Left ventricle myocardium inferior (tissue), 1 donor: ENCODE measurements at regions of chr4 and their contacts with region 1.

Region 1: GRCh38 chr4:74311696-74312313 is 3.5 kb downstream of the EPGN start:
- DNase-seq: no peak
- H3K4me3 ChIP-seq: no peak overlapping the region
- H3K27ac ChIP-seq: no peak overlapping the region
- H3K4me1 ChIP-seq: no peaks in the 10 kb centered on the region
- H3K27me3 ChIP-seq: no peaks in the 10 kb centered on the region
- CTCF ChIP-seq: peak; percentile 74

Region 2: GRCh38 chr4:74189331-74190043 is 122.3 kb before region 1 on chr4:
- intact Hi-C with region 1: loop called (anchors 5 kb)
- DNase-seq: no peak
- H3K4me3 ChIP-seq: no peak overlapping the region
- H3K27ac ChIP-seq: no peak overlapping the region
- H3K4me1 ChIP-seq: no peaks in the 10 kb centered on the region
- H3K27me3 ChIP-seq: no peaks in the 10 kb centered on the region
- CTCF ChIP-seq: peak; percentile 76

Region 3: DNA sequence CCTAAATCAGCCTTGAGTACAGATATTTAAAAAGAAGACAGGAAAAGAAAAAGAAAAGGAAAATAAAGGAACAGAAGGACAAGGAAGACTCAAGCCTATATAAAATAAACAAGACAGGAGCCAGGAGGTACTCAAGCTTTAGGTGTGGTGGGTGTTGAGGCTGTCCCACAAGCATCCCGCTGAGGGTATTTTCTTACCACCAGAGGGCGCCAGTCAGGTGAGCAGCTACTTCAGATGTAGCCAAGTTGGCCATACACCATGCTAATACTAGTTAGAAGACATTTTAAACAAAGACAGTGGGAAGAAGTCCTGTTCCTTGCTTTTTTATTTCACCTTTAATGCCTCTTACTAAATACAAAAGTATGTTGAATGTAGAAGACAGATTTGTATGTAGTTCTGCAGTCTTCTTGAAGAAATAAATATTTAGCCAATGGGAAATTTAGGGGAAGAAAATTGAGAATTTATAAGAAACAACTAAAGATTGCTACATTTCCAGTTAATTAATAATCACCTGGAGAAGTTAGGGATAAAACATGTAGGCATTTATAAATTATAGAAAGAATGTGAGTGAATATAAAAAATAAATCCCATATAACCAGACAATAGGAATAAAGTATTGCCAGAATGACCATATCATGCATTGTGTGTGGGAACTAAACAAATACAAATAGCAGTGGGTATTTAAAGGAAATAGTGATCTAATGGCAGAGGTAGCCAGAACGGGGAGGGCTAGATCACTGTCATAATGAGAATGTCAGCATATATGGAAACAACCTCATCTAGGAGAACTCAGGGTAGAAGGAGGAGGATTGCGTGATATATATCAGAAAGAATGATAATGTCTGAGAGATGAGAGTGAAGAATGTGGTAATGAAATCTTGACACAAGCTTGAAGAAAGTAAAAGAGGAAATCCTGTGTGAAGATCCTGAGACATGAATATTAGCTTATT is 82.8 kb before region 1 on chr4:
- intact Hi-C with region 1: loop called (anchors 5 kb)
- DNase-seq: peak; percentile 59
- H3K4me3 ChIP-seq: no peak overlapping the region
- H3K27ac ChIP-seq: no peak overlapping the region
- H3K4me1 ChIP-seq: peaks cover 13% of the 10 kb centered on the region
- H3K27me3 ChIP-seq: no peaks in the 10 kb centered on the region
- CTCF ChIP-seq: peak; percentile 89

Region 4: GRCh38 chr4:74431113-74431826 is 119.5 kb after region 1 on chr4:
- intact Hi-C with region 1: no loop called
- DNase-seq: no peak
- H3K4me3 ChIP-seq: no peak overlapping the region
- H3K27ac ChIP-seq: peak overlapping the region; percentile 53
- H3K4me1 ChIP-seq: peaks cover 18% of the 10 kb centered on the region
- H3K27me3 ChIP-seq: no peaks in the 10 kb centered on the region
- CTCF ChIP-seq: no peak

Region 5: GRCh38 chr4:74451200-74451661 is 139.4 kb after region 1 on chr4:
- intact Hi-C with region 1: no loop called
- DNase-seq: no peak
- H3K4me3 ChIP-seq: no peak overlapping the region
- H3K27ac ChIP-seq: no peak overlapping the region
- H3K4me1 ChIP-seq: no peaks in the 10 kb centered on the region
- H3K27me3 ChIP-seq: no peaks in the 10 kb centered on the region
- CTCF ChIP-seq: no peak

Region 6: GRCh38 chr4:74583077-74583693 is 271.4 kb after region 1 on chr4:
- intact Hi-C with region 1: no loop called
- DNase-seq: no peak
- H3K4me3 ChIP-seq: no peak overlapping the region
- H3K27ac ChIP-seq: no peak overlapping the region
- H3K4me1 ChIP-seq: no peaks in the 10 kb centered on the region
- H3K27me3 ChIP-seq: no peaks in the 10 kb centered on the region
- CTCF ChIP-seq: no peak

Region 7: GRCh38 chr4:74659576-74660411 is 348.0 kb after region 1 on chr4:
- intact Hi-C with region 1: no loop called
- DNase-seq: no peak
- H3K4me3 ChIP-seq: no peak overlapping the region
- H3K27ac ChIP-seq: no peak overlapping the region
- H3K4me1 ChIP-seq: no peaks in the 10 kb centered on the region
- H3K27me3 ChIP-seq: peaks cover 7% of the 10 kb centered on the region
- CTCF ChIP-seq: no peak